Aorta (tissue), 5 donors: ENCODE measurements at regions of chr20 and their contacts with region 1.

Region 1: GRCh38 chr20:24992487-24993205 is at the start of gene APMAP:
- DNase-seq: peak; percentile 98 to 99
- ATAC-seq: peak; percentile 97
- H3K4me3 ChIP-seq: peak within 1 kb of the TSS; percentile 48 to 78
- H3K27ac ChIP-seq: peak within 1 kb of the TSS; percentile 90 to 97
- H3K4me1 ChIP-seq: no peaks in the 10 kb centered on the region
- H3K27me3 ChIP-seq: no peaks in the 10 kb centered on the region
- total RNA-seq, gene APMAP: 43.8 to 54.1 TPM

Region 2: GRCh38 chr20:24560571-24561491 is 431.8 kb before region 1 on chr20:
- intact Hi-C with region 1: no loop called
- DNase-seq: no peak
- ATAC-seq: no peak
- H3K4me3 ChIP-seq: no peak overlapping the region
- H3K27ac ChIP-seq: no peak overlapping the region
- H3K4me1 ChIP-seq: no peaks in the 10 kb centered on the region
- H3K27me3 ChIP-seq: no peaks in the 10 kb centered on the region

Region 3: DNA sequence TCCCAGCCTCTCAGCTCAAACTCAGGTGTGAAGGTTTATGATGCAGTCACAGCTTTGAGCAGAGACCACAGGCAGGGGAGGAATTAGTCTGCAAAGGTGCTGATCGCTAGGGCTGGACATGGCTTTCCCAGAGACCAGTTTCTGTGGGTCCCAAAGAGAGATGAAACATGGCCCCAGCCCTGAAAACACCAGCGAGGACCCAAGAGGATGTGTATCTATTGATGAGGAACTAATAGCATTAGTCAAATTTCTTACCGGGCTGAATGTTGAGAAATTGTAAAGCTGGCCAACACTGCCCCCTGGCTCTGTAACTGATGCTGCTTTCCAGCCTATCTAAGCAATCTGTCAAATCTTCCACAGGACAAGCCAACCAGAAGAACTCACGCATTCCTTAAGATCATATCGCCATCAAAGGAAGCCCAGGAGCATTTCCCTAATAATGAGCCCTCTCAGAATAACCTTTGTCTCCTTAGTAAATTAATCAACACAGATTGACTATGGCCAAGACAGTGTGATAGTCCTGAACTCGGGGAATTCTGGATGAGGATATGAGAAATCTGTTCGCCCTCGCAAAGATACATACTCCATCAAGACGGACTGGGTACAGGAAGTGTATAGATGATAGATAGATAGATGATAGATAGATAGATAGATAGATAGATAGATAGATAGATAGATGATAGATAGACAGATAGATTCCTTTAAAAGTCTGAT is 73.1 kb after region 1 on chr20:
- intact Hi-C with region 1: loop called (anchors 1 kb)
- DNase-seq: peak; percentile 68 to 85
- ATAC-seq: peak; percentile 83
- H3K4me3 ChIP-seq: no peak overlapping the region
- H3K27ac ChIP-seq: no peak overlapping the region
- H3K4me1 ChIP-seq: no peaks in the 10 kb centered on the region
- H3K27me3 ChIP-seq: no peaks in the 10 kb centered on the region

Region 4: DNA sequence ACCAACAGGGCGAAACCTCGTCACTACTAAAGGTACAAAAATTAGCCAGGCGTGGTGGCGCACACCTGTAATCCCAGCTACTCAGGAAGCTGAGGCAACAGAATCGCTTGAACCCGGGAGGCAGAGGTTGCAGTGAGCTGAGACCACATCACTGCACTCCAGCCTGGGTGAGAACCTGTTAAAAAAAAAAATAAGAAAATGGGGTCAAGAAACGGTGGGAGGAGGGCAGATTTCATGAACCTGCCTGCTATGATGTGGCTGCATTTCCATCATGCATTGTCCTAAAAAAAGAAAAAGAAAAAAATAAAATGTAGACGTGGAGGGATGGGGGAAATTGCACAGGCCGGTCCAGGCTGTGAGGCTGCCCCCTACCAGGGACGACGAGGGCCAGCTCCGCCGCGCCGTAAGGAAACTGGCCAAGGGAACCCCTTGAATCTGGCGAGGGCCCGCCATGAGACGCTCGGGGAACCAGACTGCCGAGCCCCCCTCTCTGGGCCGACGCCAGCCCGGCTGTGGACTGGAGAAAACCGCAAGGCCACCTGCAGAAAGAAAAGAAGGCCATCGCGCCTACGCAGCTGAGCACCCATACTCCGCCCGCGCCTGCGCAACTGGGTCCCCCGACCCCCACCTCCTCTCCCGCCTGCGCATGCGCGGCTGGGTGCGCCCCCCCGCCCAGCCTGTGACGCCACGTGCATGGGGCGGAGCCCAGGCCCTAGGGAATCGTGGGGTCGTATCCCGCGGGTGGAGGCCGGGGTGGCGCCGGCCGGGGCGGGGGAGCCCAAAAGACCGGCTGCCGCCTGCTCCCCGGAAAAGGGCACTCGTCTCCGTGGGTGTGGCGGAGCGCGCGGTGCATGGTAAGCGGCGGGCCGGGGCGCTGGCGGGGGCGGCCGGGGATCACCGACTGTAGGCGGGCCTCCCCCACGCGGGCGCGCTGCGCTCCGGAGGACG is 202.6 kb after region 1 on chr20 and contains the start of gene ENTPD6:
- intact Hi-C with region 1: loop called (anchors 5 kb)
- DNase-seq: peak; percentile 95 to 97
- ATAC-seq: peak; percentile 97
- H3K4me3 ChIP-seq: peak within 1 kb of the TSS; percentile 69 to 77
- H3K27ac ChIP-seq: peak within 1 kb of the TSS in 1 of 2 donors; percentile 43
- H3K4me1 ChIP-seq: peaks cover 0 to 3% of the 10 kb centered on the region in 2 donors
- H3K27me3 ChIP-seq: no peaks in the 10 kb centered on the region
- total RNA-seq, gene ENTPD6: 68.8 to 69.8 TPM

Region 5: DNA sequence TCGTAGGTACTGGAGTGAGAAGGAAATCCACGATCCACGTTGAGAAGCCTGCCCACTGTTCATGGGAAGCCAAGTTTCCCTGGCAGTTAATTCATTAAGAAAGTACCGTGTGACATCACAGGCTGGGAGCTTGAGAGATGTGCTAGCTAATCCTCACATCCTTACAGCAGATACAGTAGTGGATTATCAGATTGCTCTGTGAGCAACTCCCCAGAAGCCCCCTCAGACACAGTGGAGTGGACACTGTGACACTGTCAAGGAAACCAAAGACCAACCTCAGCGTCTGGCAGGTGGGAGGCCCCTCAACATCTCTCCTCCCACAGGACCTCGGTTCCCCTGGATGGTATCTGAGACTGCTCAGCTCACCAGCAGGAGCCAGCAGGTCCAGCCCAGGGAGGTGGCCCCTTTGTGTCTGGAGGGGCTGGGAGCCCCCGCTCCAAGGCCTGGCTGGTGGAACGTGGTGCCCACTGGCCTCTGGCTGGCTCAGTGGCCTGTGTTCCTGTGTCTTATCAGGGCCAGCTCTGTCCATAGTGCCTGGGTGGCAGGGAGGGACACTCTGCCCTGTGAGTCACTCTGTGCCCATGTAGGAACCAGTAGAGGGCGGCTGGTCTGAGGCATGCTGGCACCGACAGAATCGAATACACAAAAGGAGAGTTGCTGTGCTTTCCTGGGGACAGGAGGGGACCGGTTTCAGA is 262.5 kb after region 1 on chr20:
- intact Hi-C with region 1: loop called in 1 of 2 experiments (anchors 10 kb)
- DNase-seq: peak; percentile 76 to 77
- ATAC-seq: peak; percentile 76
- H3K4me3 ChIP-seq: no peak overlapping the region
- H3K27ac ChIP-seq: peak overlapping the region in 1 of 2 donors; percentile 2
- H3K4me1 ChIP-seq: peaks cover 0 to 2% of the 10 kb centered on the region in 2 donors
- H3K27me3 ChIP-seq: no peaks in the 10 kb centered on the region

Region 6: DNA sequence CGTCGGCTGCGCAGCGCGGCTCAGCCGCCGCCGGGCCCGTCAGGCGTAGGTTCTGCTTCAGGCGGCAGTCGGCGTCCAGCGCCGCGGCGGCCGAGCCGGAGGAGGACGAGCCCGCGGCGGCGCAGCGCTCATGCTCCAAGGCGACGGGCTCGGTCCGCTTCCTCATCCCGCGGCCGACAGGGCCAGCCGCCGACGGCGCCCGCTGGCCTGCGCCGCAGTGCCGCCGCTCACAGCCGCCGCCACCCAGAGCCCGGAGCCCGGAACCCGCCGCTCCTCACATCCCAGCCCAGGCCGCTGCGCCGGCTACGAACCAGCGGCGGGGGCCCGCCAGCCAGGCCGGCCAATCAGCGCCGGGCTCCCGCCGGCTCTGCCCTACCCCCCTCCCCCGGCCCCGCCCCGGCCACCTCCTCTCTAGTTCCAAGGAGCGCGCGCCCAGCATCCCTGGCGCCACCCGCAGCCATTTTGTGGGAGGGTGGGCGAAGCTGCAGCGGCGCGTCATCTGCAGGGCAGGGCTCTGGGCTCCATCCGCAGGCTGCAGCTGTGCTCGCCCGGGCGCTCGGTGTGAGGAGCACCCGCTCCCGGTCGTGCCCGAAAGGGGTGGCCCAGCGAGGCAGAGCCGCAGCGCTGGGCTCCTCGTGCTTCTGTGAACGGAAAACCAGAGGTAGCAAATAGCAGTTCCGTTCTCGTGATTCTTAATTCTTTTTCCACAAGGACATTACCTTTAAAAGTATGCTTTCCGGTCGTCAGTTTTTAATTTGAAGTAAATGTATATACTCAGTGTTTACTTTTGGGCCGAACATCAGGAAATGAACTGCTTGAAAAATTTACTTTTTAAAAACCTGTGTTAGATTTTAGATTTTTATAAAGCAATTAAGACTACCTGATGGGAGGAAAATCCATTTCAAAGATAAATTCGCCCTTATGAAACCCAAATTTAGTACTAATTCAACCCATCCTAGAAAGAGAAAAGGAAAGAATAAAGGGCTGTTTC is 398.2 kb after region 1 on chr20 and contains the start of gene ABHD12:
- intact Hi-C with region 1: loop called (anchors 2 to 5 kb)
- DNase-seq: peak; percentile 98 to 99
- ATAC-seq: peak; percentile 99
- H3K4me3 ChIP-seq: peak within 1 kb of the TSS; percentile 70 to 76
- H3K27ac ChIP-seq: peak within 1 kb of the TSS in 1 of 2 donors; percentile 81
- H3K4me1 ChIP-seq: no peaks in the 10 kb centered on the region
- H3K27me3 ChIP-seq: no peaks in the 10 kb centered on the region
- total RNA-seq, gene ABHD12: 31.6 to 32.3 TPM